HCT116 (cell line): ENCODE measurements at regions of chr12 and their contacts with region 1.

Region 1: GRCh38 chr12:115916910-115917668 is 360.4 kb downstream of the MED13L start:
- DNase-seq: peak; percentile 31
- ATAC-seq: peak; percentile 99
- H3K4me3 ChIP-seq: no peak overlapping the region
- H3K27ac ChIP-seq: no peak overlapping the region
- H3K4me1 ChIP-seq: peaks cover 0 to 8% of the 10 kb centered on the region in 2 experiments; a peak in 1 of 4 replicates
- H3K27me3 ChIP-seq: no peaks in the 10 kb centered on the region
- CTCF ChIP-seq: peak; percentile 84 to 86 (median 85)
- POLR2A ChIP-seq: no peak
- RAD21 ChIP-seq: peak; percentile 98

Region 2: DNA sequence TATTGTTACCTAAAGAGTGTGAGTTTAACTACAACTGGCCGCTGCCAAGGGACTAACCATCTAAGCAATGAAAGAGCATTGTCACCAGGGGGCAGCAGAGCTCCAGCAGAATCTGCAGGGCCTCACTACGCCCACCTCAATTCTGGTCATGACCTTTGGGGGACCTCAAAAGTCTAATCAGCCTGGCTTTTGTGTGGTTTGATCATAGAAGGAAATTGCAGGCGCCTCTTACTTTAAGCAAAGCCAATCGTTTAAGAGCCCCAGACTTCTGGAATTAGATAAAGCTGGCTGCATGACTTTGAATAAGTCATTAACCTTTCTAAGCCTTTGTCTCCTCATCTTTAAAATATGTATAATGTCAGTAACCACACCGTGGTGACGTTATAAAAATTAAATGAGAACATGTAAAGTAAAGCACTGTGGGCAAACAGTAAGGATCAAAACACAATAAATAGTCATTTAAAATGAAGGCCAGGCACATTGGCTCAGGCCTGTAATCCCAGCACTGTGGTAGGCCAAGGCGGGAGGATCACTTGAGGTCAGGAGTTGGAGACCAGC is 1291.7 kb before region 1 on chr12:
- CTCF ChIA-PET with region 1: no interaction called
- POLR2A ChIA-PET with region 1: no interaction called
- RAD21 ChIA-PET with region 1: no interaction called
- intact Hi-C with region 1: loop called (anchors 2 kb)
- DNase-seq: peak; percentile 52
- ATAC-seq: peak; percentile 89
- H3K4me3 ChIP-seq: no peak overlapping the region
- H3K27ac ChIP-seq: no peak overlapping the region
- H3K4me1 ChIP-seq: peaks cover 12 to 18% of the 10 kb centered on the region in 2 experiments; a peak in 3 of 4 replicates
- H3K27me3 ChIP-seq: no peaks in the 10 kb centered on the region
- CTCF ChIP-seq: peak; percentile 73 to 89 (median 87)
- POLR2A ChIP-seq: no peak
- RAD21 ChIP-seq: peak; percentile 85

Region 3: GRCh38 chr12:114668151-114668885 is 1248.8 kb before region 1 on chr12:
- CTCF ChIA-PET with region 1: no interaction called
- POLR2A ChIA-PET with region 1: no interaction called
- RAD21 ChIA-PET with region 1: no interaction called
- intact Hi-C with region 1: loop called (anchors 1 kb)
- DNase-seq: peak; percentile 61
- ATAC-seq: peak; percentile 96
- H3K4me3 ChIP-seq: peak overlapping the region; percentile 35 to 54
- H3K27ac ChIP-seq: no peak overlapping the region
- H3K4me1 ChIP-seq: peaks cover 2 to 13% of the 10 kb centered on the region in 2 experiments; a peak in 2 of 4 replicates
- H3K27me3 ChIP-seq: no peaks in the 10 kb centered on the region
- CTCF ChIP-seq: peak; percentile 54 to 69 (median 58)
- POLR2A ChIP-seq: no peak
- RAD21 ChIP-seq: peak; percentile 93

Region 4: GRCh38 chr12:115752913-115753726 is 164.0 kb before region 1 on chr12:
- CTCF ChIA-PET with region 1: interaction called, 3 read pairs
- POLR2A ChIA-PET with region 1: no interaction called
- RAD21 ChIA-PET with region 1: no interaction called
- intact Hi-C with region 1: loop called (anchors 5 kb)
- DNase-seq: peak; percentile 42
- ATAC-seq: peak; percentile 98
- H3K4me3 ChIP-seq: no peak overlapping the region
- H3K27ac ChIP-seq: no peak overlapping the region
- H3K4me1 ChIP-seq: no peaks in the 10 kb centered on the region
- H3K27me3 ChIP-seq: peaks cover 51% of the 10 kb centered on the region
- CTCF ChIP-seq: peak; percentile 44 to 66 (median 65); a peak in 4 of 6 replicates
- POLR2A ChIP-seq: no peak
- RAD21 ChIP-seq: peak; percentile 90

Region 5: DNA sequence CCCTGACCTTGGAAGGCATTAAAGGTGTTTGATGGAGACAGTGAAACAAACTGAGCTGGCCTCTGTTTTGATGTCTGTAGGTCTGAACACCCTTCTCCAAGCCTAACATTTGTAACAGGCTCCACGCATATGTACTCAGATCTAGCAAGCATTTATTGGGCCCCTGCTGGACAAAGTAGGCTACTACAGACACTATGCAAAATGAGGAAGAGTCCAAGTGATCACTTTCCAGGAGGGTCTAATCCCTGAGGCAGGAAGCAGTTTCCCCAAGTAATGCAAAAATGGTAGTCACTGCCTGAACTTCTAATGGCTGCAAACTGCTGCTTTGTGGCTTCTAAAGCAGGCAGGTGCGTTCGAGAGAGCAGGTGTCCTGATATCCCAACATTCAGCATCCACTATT is 45.4 kb before region 1 on chr12:
- CTCF ChIA-PET with region 1: interaction called, 6 read pairs
- POLR2A ChIA-PET with region 1: no interaction called
- RAD21 ChIA-PET with region 1: no interaction called
- intact Hi-C with region 1: loop called (anchors 1 kb)
- DNase-seq: peak; percentile 58
- ATAC-seq: peak; percentile 87
- H3K4me3 ChIP-seq: peak overlapping the region in 1 of 2 experiments; percentile 44; a peak in 1 of 4 replicates
- H3K27ac ChIP-seq: peak overlapping the region; percentile 47
- H3K4me1 ChIP-seq: peaks cover 36 to 43% of the 10 kb centered on the region in 2 experiments
- H3K27me3 ChIP-seq: no peaks in the 10 kb centered on the region
- CTCF ChIP-seq: peak; percentile 26 to 81 (median 79); a peak in 5 of 6 replicates
- POLR2A ChIP-seq: no peak
- RAD21 ChIP-seq: 0 out of 2 replicates have a peak, but pooled peaks have one; percentile 23

Region 6: GRCh38 chr12:116142936-116143898 is 226.1 kb after region 1 on chr12:
- CTCF ChIA-PET with region 1: no interaction called
- POLR2A ChIA-PET with region 1: no interaction called
- RAD21 ChIA-PET with region 1: no interaction called
- intact Hi-C with region 1: no loop called
- DNase-seq: no peak
- ATAC-seq: no peak
- H3K4me3 ChIP-seq: no peak overlapping the region
- H3K27ac ChIP-seq: peak overlapping the region; percentile 21; the same call in 1 of the 2 replicates
- H3K4me1 ChIP-seq: peaks cover 30 to 74% of the 10 kb centered on the region in 2 experiments
- H3K27me3 ChIP-seq: no peaks in the 10 kb centered on the region
- CTCF ChIP-seq: no peak
- POLR2A ChIP-seq: no peak
- RAD21 ChIP-seq: no peak

Region 7: DNA sequence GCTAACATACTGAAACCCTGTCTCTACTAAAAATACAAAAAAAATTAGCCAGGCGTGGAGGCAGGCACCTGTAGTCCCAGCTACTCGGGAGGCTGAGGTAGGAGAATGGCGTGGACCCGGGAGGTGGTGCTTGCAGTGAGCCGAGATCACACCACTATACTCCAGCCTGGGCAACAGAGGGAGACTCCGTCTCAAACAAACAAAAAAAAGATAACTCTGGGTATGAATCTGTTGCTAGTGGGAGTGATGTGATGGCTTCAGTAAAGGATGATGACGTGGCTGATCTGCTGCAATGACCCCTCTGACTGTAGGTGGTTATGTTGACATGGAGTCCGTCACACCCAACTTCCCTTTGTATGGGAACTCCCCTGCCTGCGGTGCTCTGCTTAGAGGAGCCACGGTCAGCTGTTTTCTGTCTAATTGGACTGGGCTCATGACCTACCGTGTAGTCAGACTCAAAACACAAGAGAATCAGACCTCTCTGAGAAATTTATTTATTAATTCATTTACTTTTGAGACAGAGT is 419.5 kb after region 1 on chr12:
- CTCF ChIA-PET with region 1: no interaction called
- POLR2A ChIA-PET with region 1: no interaction called
- RAD21 ChIA-PET with region 1: no interaction called
- intact Hi-C with region 1: no loop called
- DNase-seq: no peak
- ATAC-seq: no peak; the same call in 1 of the 2 replicates
- H3K4me3 ChIP-seq: no peak overlapping the region
- H3K27ac ChIP-seq: no peak overlapping the region
- H3K4me1 ChIP-seq: peaks cover 0 to 14% of the 10 kb centered on the region in 2 experiments; a peak in 3 of 4 replicates
- H3K27me3 ChIP-seq: no peaks in the 10 kb centered on the region
- CTCF ChIP-seq: no peak
- POLR2A ChIP-seq: no peak
- RAD21 ChIP-seq: no peak